GM12878 (cell line): ENCODE measurements at regions of chr12 and their contacts with region 1.

Region 1: GRCh38 chr12:50581201-50582184 is 76.7 kb downstream of the DIP2B start:
- DNase-seq: no peak
- ATAC-seq: no peak
- H3K4me3 ChIP-seq: no peak overlapping the region
- H3K27ac ChIP-seq: no peak overlapping the region; the same call in 1 of the 2 replicates
- H3K4me1 ChIP-seq: peaks cover 14% of the 10 kb centered on the region
- H3K27me3 ChIP-seq: no peaks in the 10 kb centered on the region
- CTCF ChIP-seq: no peak
- EP300 ChIP-seq: no peak
- POLR2A ChIP-seq: no peak
- RAD21 ChIP-seq: no peak

Region 2: GRCh38 chr12:50533203-50533584 is 48.3 kb before region 1 on chr12:
- CTCF ChIA-PET with region 1: interaction called, 3 read pairs
- POLR2A ChIA-PET with region 1: interaction called, 5 read pairs
- RAD21 ChIA-PET with region 1: interaction called, 4 read pairs
- SMC1A ChIA-PET with region 1: no interaction called
- in situ Hi-C with region 1: no loop called
- intact Hi-C with region 1: loop called (anchors 5 kb)
- DNase-seq: no peak
- ATAC-seq: peak; percentile 2
- H3K4me3 ChIP-seq: no peak overlapping the region; the same call in 1 of the 2 replicates
- H3K27ac ChIP-seq: peak overlapping the region; percentile 96
- H3K4me1 ChIP-seq: peaks cover 57% of the 10 kb centered on the region
- H3K27me3 ChIP-seq: no peaks in the 10 kb centered on the region
- CTCF ChIP-seq: no peak
- EP300 ChIP-seq: no peak
- POLR2A ChIP-seq: no peak
- RAD21 ChIP-seq: no peak